ENCODE measurements at regions of chr5 and their contacts with region 1.

Region 1: GRCh38 chr5:31911291-31912265 is 262.5 kb downstream of the GOLPH3 start:
- DNase-seq: no peak
- H3K4me3 ChIP-seq: no peak overlapping the region
- H3K27ac ChIP-seq: no peak overlapping the region
- H3K4me1 ChIP-seq: no peaks in the 10 kb centered on the region
- H3K27me3 ChIP-seq: peaks cover 94% of the 10 kb centered on the region
- CTCF ChIP-seq: no peak

Region 2: GRCh38 chr5:31880449-31880848 is 31.1 kb before region 1 on chr5:
- CTCF ChIA-PET with region 1: no interaction called
- POLR2A ChIA-PET with region 1: no interaction called
- intact Hi-C with region 1: loop called (anchors 2 kb)
- DNase-seq: no peak
- H3K4me3 ChIP-seq: no peak overlapping the region
- H3K27ac ChIP-seq: no peak overlapping the region
- H3K4me1 ChIP-seq: no peaks in the 10 kb centered on the region
- H3K27me3 ChIP-seq: peaks cover 79% of the 10 kb centered on the region
- CTCF ChIP-seq: no peak

Measured in PC-9 (cell line).